Colonic mucosa (tissue), 4 donors: ENCODE measurements at regions of chr5 and their contacts with region 1.

Region 1: GRCh38 chr5:74766849-74767578 is at the starts of genes GFM2 and NSA2:
- DNase-seq: peak; percentile 95
- H3K4me3 ChIP-seq: peak within 1 kb of the TSS; percentile 96
- H3K27ac ChIP-seq: peak within 1 kb of the TSS; percentile 68
- H3K4me1 ChIP-seq: peaks cover 16% of the 10 kb centered on the region
- H3K27me3 ChIP-seq: no peaks in the 10 kb centered on the region
- CTCF ChIP-seq: no peak
- total RNA-seq, gene GFM2: 24.1 to 31.4 TPM
- total RNA-seq, gene NSA2: 55.0 to 56.9 TPM

Region 2: GRCh38 chr5:74693191-74693590 is 73.8 kb before region 1 on chr5:
- intact Hi-C with region 1: loop called (anchors 10 kb)
- DNase-seq: no peak
- H3K4me3 ChIP-seq: no peak overlapping the region
- H3K27ac ChIP-seq: no peak overlapping the region
- H3K4me1 ChIP-seq: no peaks in the 10 kb centered on the region
- H3K27me3 ChIP-seq: no peaks in the 10 kb centered on the region
- CTCF ChIP-seq: no peak

Region 3: GRCh38 chr5:74903165-74903787 is 136.3 kb after region 1 on chr5:
- intact Hi-C with region 1: no loop called
- DNase-seq: peak; percentile 62
- H3K4me3 ChIP-seq: no peak overlapping the region
- H3K27ac ChIP-seq: no peak overlapping the region
- H3K4me1 ChIP-seq: no peaks in the 10 kb centered on the region
- H3K27me3 ChIP-seq: no peaks in the 10 kb centered on the region
- CTCF ChIP-seq: peak; percentile 52

Region 4: GRCh38 chr5:75336625-75337339 is 569.8 kb after region 1 on chr5 and contains the start of gene HMGCR:
- intact Hi-C with region 1: loop called (anchors 5 kb)
- DNase-seq: peak; percentile 98
- H3K4me3 ChIP-seq: peak within 1 kb of the TSS; percentile 63
- H3K27ac ChIP-seq: peak within 1 kb of the TSS; percentile 95
- H3K4me1 ChIP-seq: no peaks in the 10 kb centered on the region
- H3K27me3 ChIP-seq: no peaks in the 10 kb centered on the region
- CTCF ChIP-seq: no peak
- total RNA-seq, gene HMGCR: 118 to 319 TPM